ENCODE measurements at regions of chr10 and their contacts with region 1.

Region 1: DNA sequence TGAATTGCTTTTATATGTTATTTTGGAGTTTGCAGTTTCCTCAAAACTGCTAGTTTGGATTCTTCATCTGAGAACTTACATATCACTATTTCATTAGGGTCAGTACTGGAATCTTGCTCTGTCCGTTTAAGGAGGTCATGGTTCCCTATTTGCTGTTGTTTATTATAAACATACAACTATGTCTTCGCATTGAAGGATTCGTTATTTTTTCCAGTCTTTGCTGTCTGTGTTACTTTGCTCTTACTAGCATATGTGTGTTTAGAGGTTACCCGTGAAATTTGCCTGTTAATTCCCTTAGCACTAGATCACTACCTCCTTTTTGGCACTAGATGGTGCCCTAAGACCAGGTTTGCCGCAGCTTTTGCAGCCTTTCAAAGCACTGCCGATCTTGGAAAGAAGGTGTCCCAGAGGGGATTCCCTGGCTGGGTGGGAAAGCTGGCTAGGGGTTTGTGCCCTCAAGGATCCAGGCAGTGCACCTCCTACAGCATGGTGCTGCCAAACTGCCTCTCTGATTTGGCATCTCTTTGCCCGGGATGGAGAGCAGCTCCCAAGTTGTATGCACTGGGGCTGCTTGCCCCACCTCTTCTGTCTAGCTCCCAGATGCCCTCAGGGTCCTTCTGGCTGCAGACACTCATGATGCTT is 103.1 kb upstream of the APBB1IP start:
- DNase-seq: peak; percentile 50
- H3K4me3 Mint-ChIP-seq: peak overlapping the region; percentile 84
- H3K27ac Mint-ChIP-seq: peak overlapping the region; percentile 81
- H3K4me1 Mint-ChIP-seq: peaks cover 14% of the 10 kb centered on the region
- H3K27me3 Mint-ChIP-seq: no peaks in the 10 kb centered on the region

Region 2: DNA sequence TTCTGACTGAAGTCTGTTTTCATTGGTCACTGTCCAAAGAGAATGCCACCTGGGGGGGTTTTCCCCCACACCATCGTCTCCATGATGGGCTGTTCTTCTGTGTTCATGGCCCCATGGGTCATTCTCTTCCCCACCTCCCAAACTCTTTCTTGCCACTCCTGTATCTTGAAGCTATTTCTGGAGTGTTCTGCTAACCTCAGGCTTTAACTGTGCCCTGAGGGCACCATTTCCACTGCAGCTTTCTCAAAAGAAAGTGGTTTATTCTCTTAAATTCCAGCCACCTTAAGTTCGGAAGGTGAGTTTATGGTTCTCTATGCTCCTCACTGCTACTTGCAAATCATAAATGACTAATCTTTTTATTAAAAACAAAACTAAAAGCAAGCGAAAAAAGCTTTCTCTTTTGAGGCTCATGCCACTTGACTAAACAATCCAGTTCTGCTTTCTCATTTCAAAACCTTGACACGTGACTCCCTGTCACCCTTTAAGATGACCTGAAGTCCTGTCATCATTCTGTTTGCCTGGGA is 95.7 kb after region 1 on chr10:
- intact Hi-C with region 1: loop called (anchors 2 kb)
- DNase-seq: peak; percentile 43
- H3K4me3 Mint-ChIP-seq: peak overlapping the region; percentile 57
- H3K27ac Mint-ChIP-seq: peak overlapping the region; percentile 81
- H3K4me1 Mint-ChIP-seq: peaks cover 16% of the 10 kb centered on the region
- H3K27me3 Mint-ChIP-seq: peaks cover 3% of the 10 kb centered on the region

Region 3: GRCh38 chr10:26503911-26504310 is 168.9 kb after region 1 on chr10:
- intact Hi-C with region 1: loop called (anchors 5 kb)
- DNase-seq: no peak
- H3K4me3 Mint-ChIP-seq: no peak overlapping the region
- H3K27ac Mint-ChIP-seq: no peak overlapping the region
- H3K4me1 Mint-ChIP-seq: no peaks in the 10 kb centered on the region
- H3K27me3 Mint-ChIP-seq: no peaks in the 10 kb centered on the region

Region 4: GRCh38 chr10:26612151-26612915 is 277.3 kb after region 1 on chr10:
- intact Hi-C with region 1: loop called (anchors 2 kb)
- DNase-seq: no peak
- H3K4me3 Mint-ChIP-seq: no peak overlapping the region
- H3K27ac Mint-ChIP-seq: no peak overlapping the region
- H3K4me1 Mint-ChIP-seq: no peaks in the 10 kb centered on the region
- H3K27me3 Mint-ChIP-seq: peaks cover 15% of the 10 kb centered on the region

Region 5: DNA sequence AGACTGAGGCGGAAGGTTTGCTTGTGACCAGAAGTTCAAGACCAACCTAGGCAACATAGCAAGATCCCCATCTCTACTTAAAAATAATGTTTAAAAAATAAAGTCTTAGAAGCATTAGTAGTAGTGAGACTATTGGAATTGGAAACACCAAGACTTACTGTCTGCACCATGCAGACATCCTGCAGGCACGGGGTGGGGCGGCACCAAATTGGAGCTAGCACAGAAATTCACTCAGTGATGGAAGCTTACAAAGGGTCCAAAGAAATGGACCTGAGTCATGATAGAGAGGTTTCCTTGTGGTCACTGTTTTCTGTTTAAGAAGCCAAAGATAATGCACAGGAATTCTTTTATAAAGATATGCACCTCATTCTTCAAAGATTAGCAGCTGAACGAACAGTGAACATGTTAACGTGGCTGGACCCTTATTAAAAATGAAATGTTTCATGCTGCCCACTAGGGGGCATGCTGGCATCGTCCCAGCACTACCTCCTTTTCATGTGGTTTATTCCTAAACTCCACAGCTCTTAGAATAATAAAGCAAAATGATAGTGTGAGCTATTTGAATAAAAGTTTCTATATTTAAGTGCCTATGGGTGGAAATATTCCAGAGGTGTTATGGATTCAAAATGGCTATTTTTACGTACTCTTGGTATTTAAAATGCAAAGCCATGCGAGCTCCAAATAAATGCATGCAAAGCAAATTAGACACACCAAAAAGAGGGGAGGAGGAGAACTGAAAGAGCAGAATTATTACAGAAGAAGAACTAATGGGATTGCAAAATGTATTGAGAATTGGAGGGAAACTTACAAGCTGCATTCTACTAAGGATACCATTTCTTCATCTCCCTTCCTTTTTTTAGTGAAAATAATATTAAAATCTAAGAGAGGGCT is 391.0 kb after region 1 on chr10:
- intact Hi-C with region 1: loop called (anchors 1 kb)
- DNase-seq: no peak
- H3K4me3 Mint-ChIP-seq: no peak overlapping the region
- H3K27ac Mint-ChIP-seq: peak overlapping the region; percentile 42
- H3K4me1 Mint-ChIP-seq: peaks cover 15% of the 10 kb centered on the region
- H3K27me3 Mint-ChIP-seq: no peaks in the 10 kb centered on the region